ENCODE measurements at regions of chr12 and their contacts with region 1.

Region 1: GRCh38 chr12:95820102-95820703 is 29.6 kb upstream of the NTN4 start:
- DNase-seq: no peak
- ATAC-seq: no peak
- H3K4me3 ChIP-seq: no peak overlapping the region
- H3K27ac ChIP-seq: no peak overlapping the region
- H3K4me1 ChIP-seq: no peaks in the 10 kb centered on the region
- H3K27me3 ChIP-seq: no peaks in the 10 kb centered on the region
- CTCF ChIP-seq: peak in 3 of 5 experiments; percentile 17 to 46 (median 45)
- POLR2A ChIP-seq: no peak

Region 2: GRCh38 chr12:95557625-95558024 is 262.6 kb before region 1 on chr12:
- in situ Hi-C with region 1: no loop called
- intact Hi-C with region 1: no loop called
- DNase-seq: no peak
- ATAC-seq: no peak
- H3K4me3 ChIP-seq: no peak overlapping the region
- H3K27ac ChIP-seq: no peak overlapping the region
- H3K4me1 ChIP-seq: no peaks in the 10 kb centered on the region
- H3K27me3 ChIP-seq: no peaks in the 10 kb centered on the region
- CTCF ChIP-seq: no peak
- POLR2A ChIP-seq: no peak

Region 3: GRCh38 chr12:95574799-95575452 is 245.3 kb before region 1 on chr12:
- in situ Hi-C with region 1: loop called in 3 of 4 experiments (anchors 5 to 10 kb)
- intact Hi-C with region 1: loop called (anchors 2 kb)
- DNase-seq: no peak
- ATAC-seq: no peak
- H3K4me3 ChIP-seq: no peak overlapping the region
- H3K27ac ChIP-seq: no peak overlapping the region
- H3K4me1 ChIP-seq: no peaks in the 10 kb centered on the region
- H3K27me3 ChIP-seq: no peaks in the 10 kb centered on the region
- CTCF ChIP-seq: peak in 3 of 5 experiments; percentile 4 to 56 (median 41)
- POLR2A ChIP-seq: no peak

Region 4: DNA sequence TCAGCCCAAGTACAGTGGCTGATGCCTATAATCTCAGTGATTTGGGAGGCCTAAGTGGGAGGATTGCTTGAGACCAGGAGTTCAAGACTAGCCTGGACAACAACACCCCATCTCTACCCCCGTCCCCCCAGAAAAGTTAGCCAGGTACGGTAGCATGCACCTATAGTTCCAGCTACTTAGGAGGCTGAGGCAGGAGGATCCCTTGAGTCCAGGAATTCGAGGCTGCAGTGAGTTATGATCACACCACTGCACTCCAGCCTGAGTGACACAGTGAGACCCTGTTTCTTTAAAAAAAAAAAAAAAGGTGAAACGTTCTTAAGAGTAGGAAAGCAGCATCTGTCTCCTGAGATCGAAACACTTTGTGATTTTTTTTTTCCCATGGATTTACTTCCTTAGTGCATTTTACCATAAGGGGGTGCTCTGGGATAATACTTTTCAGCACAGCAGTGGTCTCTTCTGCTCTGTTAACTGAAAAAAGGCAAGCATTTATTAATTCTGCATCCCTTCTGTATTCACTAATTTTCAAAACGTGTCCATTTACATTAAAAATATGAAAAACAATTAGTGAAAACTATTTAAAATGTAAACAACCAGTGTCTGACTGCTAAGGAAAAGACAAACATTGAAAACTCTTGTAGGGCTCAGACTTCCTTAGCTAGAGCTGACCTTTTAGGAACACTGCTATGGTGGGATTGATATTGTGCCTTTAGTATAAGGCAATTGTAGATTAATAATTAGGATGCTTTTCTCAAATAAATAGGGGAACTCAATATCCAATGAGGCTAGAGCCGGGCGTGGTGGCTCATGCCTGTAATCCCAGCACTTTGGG is 237.8 kb before region 1 on chr12:
- in situ Hi-C with region 1: loop called in 3 of 4 experiments (anchors 5 to 10 kb)
- intact Hi-C with region 1: loop called (anchors 1 kb)
- DNase-seq: no peak
- ATAC-seq: no peak
- H3K4me3 ChIP-seq: no peak overlapping the region
- H3K27ac ChIP-seq: no peak overlapping the region
- H3K4me1 ChIP-seq: no peaks in the 10 kb centered on the region
- H3K27me3 ChIP-seq: no peaks in the 10 kb centered on the region
- CTCF ChIP-seq: peak in 2 of 5 experiments; percentile 41 to 48
- POLR2A ChIP-seq: no peak

Region 5: GRCh38 chr12:95663525-95663924 is 156.7 kb before region 1 on chr12:
- in situ Hi-C with region 1: no loop called
- intact Hi-C with region 1: no loop called
- DNase-seq: no peak
- ATAC-seq: no peak
- H3K4me3 ChIP-seq: no peak overlapping the region
- H3K27ac ChIP-seq: peak overlapping the region in 2 of 4 donors; percentile 36 to 44
- H3K4me1 ChIP-seq: no peaks in the 10 kb centered on the region
- H3K27me3 ChIP-seq: no peaks in the 10 kb centered on the region
- CTCF ChIP-seq: no peak
- POLR2A ChIP-seq: no peak

Region 6: GRCh38 chr12:95998611-95999286 is 178.5 kb after region 1 on chr12:
- in situ Hi-C with region 1: no loop called
- intact Hi-C with region 1: loop called (anchors 2 kb)
- DNase-seq: no peak
- ATAC-seq: peak; percentile 66 to 88
- H3K4me3 ChIP-seq: no peak overlapping the region
- H3K27ac ChIP-seq: no peak overlapping the region
- H3K4me1 ChIP-seq: no peaks in the 10 kb centered on the region
- H3K27me3 ChIP-seq: no peaks in the 10 kb centered on the region
- CTCF ChIP-seq: peak; percentile 18 to 70 (median 55)
- POLR2A ChIP-seq: no peak